ENCODE measurements at regions of chr4 and their contacts with region 1.

Region 1: GRCh38 chr4:113394730-113395530 is 345.5 kb downstream of the ANK2 start:
- DNase-seq: peak; percentile 64
- ATAC-seq: peak; percentile 97
- H3K4me3 Mint-ChIP-seq: no peak overlapping the region
- H3K27ac Mint-ChIP-seq: no peak overlapping the region
- H3K4me1 Mint-ChIP-seq: peaks cover 8% of the 10 kb centered on the region
- H3K27me3 Mint-ChIP-seq: peaks cover 2% of the 10 kb centered on the region

Region 2: GRCh38 chr4:113278324-113278934 is 116.5 kb before region 1 on chr4:
- CTCF ChIA-PET with region 1: interaction called, 3 read pairs
- POLR2A ChIA-PET with region 1: no interaction called
- intact Hi-C with region 1: loop called in 1 of 2 experiments (anchors 1 kb)
- DNase-seq: peak; percentile 84
- ATAC-seq: peak; percentile 99
- H3K4me3 Mint-ChIP-seq: no peak overlapping the region
- H3K27ac Mint-ChIP-seq: no peak overlapping the region
- H3K4me1 Mint-ChIP-seq: no peaks in the 10 kb centered on the region
- H3K27me3 Mint-ChIP-seq: peaks cover 11% of the 10 kb centered on the region

Region 3: DNA sequence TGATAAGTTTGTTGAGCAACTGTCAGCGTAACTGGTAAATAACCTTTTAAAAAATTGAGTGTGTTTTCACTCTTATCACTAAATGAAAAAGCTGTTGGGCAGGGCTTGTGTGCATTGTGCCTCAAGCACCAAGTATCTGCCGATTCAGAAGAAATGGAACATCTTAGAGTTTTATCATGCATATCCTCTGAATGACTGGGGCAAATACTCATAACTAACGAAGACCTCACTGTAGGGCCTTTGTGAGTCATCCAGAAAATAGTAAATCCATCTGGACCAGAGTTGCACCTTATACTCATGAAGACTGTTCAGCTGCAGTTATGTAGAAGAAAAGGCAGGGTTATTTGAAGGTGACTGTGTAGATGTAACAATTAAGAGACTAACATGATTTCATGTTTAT is 144.5 kb after region 1 on chr4:
- CTCF ChIA-PET with region 1: interaction called, 4 read pairs
- POLR2A ChIA-PET with region 1: no interaction called
- intact Hi-C with region 1: loop called in 1 of 2 experiments (anchors 2 kb)
- DNase-seq: peak; percentile 50
- ATAC-seq: peak; percentile 87
- H3K4me3 Mint-ChIP-seq: no peak overlapping the region
- H3K27ac Mint-ChIP-seq: peak overlapping the region; percentile 83
- H3K4me1 Mint-ChIP-seq: peaks cover 34% of the 10 kb centered on the region
- H3K27me3 Mint-ChIP-seq: no peaks in the 10 kb centered on the region

Region 4: DNA sequence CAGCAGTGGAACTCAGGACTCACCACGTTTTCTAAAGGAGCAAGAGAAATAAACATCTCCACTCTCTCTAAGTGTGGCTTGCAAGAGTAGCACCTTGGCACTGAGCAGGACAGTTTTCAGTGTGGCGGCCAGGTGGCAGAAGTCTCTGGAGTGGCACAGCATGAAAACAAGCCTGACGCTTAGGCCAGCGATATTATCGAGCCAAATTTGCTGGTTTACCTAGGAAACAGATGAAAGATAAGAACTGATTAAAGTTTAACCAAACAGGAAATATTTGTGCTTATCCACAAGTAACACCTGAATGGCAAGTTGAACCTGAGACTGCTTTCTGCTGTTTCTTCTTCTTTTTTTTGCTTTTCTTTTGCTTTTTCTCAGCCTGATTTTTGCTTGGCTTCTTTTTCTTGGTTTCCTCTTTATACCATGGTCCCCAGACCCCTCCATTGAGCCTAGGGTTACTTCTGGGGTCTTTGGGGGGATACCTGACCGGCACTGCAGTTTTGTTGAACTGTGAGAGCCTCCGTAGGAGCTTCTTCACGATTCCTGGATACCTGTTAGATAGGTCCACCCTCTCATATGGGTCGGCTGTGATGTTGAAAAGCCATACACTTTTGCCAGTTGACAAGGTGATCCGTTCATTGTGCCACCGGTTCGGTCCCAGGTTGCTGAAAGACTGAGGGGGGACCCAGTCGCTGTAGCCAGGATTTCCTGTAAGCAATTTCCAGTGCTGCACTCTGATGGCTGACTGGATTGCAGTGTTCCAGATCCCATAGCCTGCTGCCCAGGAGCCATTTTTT is 507.3 kb after region 1 on chr4:
- CTCF ChIA-PET with region 1: no interaction called
- POLR2A ChIA-PET with region 1: no interaction called
- intact Hi-C with region 1: loop called (anchors 5 kb)
- DNase-seq: peak; percentile 78
- ATAC-seq: peak; percentile 96
- H3K4me3 Mint-ChIP-seq: peak overlapping the region; percentile 20
- H3K27ac Mint-ChIP-seq: peak overlapping the region; percentile 81
- H3K4me1 Mint-ChIP-seq: peaks cover 64% of the 10 kb centered on the region
- H3K27me3 Mint-ChIP-seq: no peaks in the 10 kb centered on the region

Region 5: DNA sequence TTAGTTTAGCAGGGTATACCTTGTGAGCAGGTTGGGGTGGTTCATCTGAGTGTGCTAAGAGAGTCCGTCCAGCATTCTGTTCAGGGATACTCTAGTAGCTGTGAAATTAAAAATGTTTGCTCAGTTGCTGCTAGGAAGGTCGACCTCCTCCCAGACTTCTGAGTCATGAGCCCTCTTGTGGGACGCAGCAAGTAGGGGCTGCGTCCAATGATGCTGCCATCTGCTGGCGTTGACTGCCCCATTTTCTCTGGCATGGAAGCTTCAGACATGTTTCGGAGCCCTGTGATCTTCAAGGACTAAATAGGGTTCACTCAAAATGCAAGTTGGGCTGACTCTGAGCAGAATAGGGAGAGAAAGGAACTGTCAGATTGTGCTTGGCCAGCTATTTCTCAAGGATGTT is 785.6 kb after region 1 on chr4:
- CTCF ChIA-PET with region 1: interaction called, 4 read pairs
- POLR2A ChIA-PET with region 1: no interaction called
- intact Hi-C with region 1: loop called (anchors 1 to 2 kb)
- DNase-seq: peak; percentile 60
- ATAC-seq: peak; percentile 53
- H3K4me3 Mint-ChIP-seq: no peak overlapping the region
- H3K27ac Mint-ChIP-seq: no peak overlapping the region
- H3K4me1 Mint-ChIP-seq: no peaks in the 10 kb centered on the region
- H3K27me3 Mint-ChIP-seq: peaks cover 3% of the 10 kb centered on the region

Region 6: DNA sequence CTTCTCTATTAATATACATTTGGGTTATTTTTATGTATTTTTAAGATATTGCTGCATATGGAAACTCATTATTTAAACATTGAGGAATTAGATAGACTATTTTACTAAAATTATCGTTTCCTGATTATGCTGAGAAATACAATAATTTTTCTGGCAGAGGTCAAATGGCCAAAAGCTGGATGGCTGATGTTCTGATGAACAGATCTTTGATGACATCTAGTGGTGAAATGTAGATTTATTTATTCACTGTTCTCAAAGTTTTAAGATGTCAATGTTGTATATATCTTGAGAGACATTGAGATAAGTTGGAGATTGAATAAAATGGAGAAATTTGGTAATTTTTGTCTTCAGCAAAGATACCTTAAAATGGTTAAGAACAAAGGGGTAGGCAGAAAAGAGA is 1299.8 kb after region 1 on chr4:
- CTCF ChIA-PET with region 1: interaction called, 3 read pairs
- POLR2A ChIA-PET with region 1: no interaction called
- intact Hi-C with region 1: loop called in 1 of 2 experiments (anchors 10 kb)
- DNase-seq: no peak
- ATAC-seq: no peak
- H3K4me3 Mint-ChIP-seq: no peak overlapping the region
- H3K27ac Mint-ChIP-seq: no peak overlapping the region
- H3K4me1 Mint-ChIP-seq: no peaks in the 10 kb centered on the region
- H3K27me3 Mint-ChIP-seq: peaks cover 4% of the 10 kb centered on the region